Sigmoid colon (tissue), 7 donors: ENCODE measurements at regions of chr2 and their contacts with region 1.

Region 1: GRCh38 chr2:85354286-85355072 is at the starts of genes ELMOD3 and RETSAT:
- DNase-seq: peak; percentile 99
- H3K4me3 ChIP-seq: peak within 1 kb of the TSS; percentile 56 to 83 (median 64)
- H3K27ac ChIP-seq: peak within 1 kb of the TSS; percentile 80 to 88 (median 84)
- H3K4me1 ChIP-seq: peaks cover 0 to 44% (median 27%) of the 10 kb centered on the region in 4 donors
- H3K27me3 ChIP-seq: no peaks in the 10 kb centered on the region
- CTCF ChIP-seq: no peak
- EP300 ChIP-seq: no peak
- POLR2A ChIP-seq: peak; percentile 77 to 91
- total RNA-seq, gene ELMOD3: 16.7 to 26.3 (median 22.9) TPM
- total RNA-seq, gene RETSAT: 26.5 to 54.6 (median 42.1) TPM

Region 2: DNA sequence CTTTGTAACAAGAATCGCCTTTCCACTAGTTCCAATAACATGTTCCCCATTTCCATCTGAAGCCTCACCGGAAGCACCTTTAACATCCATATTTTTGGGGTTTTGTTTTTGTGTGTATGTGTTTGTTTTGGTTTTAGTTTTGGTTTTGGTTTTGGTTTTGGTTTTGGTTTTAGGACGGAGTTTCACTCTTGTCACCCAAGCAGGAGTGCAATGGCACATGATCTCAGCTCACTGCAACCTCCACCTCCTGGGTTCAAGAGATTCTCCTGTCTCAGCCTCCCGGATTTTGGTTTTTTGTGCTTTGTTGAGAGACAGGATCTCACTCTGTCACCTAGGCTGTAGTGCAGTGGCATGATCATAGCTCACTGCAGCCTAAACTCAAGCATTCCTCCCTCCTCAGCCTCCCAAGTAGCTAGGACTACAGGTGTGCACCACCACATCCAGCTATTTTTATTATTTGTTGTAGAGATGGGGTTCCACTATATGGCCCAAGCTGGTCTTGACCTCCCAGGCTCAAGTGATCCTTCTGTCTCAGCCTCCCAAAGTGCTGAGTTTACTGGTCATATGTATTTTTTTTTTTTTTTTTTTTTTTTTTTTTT is 63.0 kb before region 1 on chr2:
- intact Hi-C with region 1: no loop called
- DNase-seq: no peak
- H3K4me3 ChIP-seq: no peak overlapping the region
- H3K27ac ChIP-seq: no peak overlapping the region
- H3K4me1 ChIP-seq: no peaks in the 10 kb centered on the region
- H3K27me3 ChIP-seq: no peaks in the 10 kb centered on the region
- CTCF ChIP-seq: no peak
- EP300 ChIP-seq: no peak
- POLR2A ChIP-seq: no peak

Region 3: DNA sequence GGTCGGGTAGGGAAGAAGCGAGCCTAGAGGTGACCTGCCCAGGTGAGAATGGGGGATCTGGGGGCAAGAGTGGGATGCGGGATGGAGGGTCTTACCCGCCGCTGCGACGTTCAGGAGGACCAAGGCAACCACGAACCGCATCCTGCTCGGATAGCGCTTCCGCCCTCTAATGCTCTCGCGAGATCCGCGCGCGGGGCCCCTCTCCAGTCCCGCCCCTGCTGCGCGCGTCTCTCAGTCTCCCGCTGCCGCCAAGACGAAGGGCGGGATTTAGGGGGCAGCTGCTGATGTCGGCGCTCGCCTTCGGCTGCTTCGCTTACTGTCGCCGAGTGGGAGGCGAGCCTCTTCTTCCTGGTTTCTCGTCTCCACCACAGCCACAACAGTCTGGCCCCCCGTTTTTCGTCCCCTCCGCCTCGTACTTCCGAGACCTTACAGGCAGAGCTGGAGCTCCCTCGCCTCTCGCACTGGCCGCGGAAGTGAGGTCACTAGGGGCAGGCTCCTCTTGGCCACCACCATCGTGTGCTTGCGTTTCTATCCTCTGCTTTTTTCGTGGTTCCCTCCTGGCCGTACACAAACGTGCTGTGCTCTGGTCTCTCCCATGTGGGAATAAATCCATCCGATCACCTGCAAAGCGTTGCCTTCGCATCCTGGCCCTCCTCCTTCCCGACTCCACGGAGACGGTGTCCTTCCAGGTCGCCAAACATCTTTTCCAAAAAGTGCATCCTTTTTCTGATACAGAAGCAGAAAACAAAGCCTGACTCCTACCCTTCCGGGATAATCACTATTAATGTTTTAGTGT is 26.5 kb before region 1 on chr2 and contains the start of gene TGOLN2:
- intact Hi-C with region 1: loop called (anchors 1 kb)
- DNase-seq: peak; percentile 96
- H3K4me3 ChIP-seq: peak within 1 kb of the TSS; percentile 70 to 86 (median 71)
- H3K27ac ChIP-seq: peak within 1 kb of the TSS; percentile 90 to 97 (median 94)
- H3K4me1 ChIP-seq: peaks cover 0 to 42% (median 42%) of the 10 kb centered on the region in 4 donors
- H3K27me3 ChIP-seq: no peaks in the 10 kb centered on the region
- CTCF ChIP-seq: peak in 1 of 4 experiments; percentile 15
- EP300 ChIP-seq: no peak
- POLR2A ChIP-seq: peak; percentile 99
- total RNA-seq, gene TGOLN2: 78.9 to 95.0 (median 80.8) TPM

Region 4: DNA sequence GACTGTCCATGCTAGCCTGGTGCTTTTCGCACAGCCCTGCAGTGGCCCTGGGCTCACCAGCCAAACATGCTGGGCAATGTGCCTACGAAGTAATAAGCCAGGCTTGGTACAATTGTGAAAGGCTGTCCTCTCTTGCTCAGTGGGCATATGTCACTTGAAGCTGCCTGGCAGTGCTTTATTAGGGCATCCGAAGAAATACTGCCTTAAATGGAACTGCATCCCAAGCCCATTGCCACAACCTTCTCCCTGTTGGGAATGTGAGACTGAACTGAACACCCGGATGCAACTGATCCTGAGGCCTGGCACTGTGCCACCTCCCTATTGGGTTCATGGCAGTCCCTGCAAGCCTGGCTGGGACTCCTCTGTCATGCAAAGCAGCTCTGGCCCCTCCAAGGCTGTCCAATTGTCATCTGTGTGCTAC is 39.8 kb after region 1 on chr2:
- intact Hi-C with region 1: no loop called
- DNase-seq: peak; percentile 71
- H3K4me3 ChIP-seq: no peak overlapping the region
- H3K27ac ChIP-seq: no peak overlapping the region
- H3K4me1 ChIP-seq: peaks cover 0 to 17% (median 17%) of the 10 kb centered on the region in 4 donors
- H3K27me3 ChIP-seq: no peaks in the 10 kb centered on the region
- CTCF ChIP-seq: no peak
- EP300 ChIP-seq: no peak
- POLR2A ChIP-seq: no peak

Region 5: GRCh38 chr2:85501248-85501647 is 146.8 kb after region 1 on chr2:
- intact Hi-C with region 1: no loop called
- DNase-seq: no peak
- H3K4me3 ChIP-seq: no peak overlapping the region
- H3K27ac ChIP-seq: no peak overlapping the region
- H3K4me1 ChIP-seq: peaks cover 0 to 15% (median 12%) of the 10 kb centered on the region in 4 donors
- H3K27me3 ChIP-seq: no peaks in the 10 kb centered on the region
- CTCF ChIP-seq: no peak
- EP300 ChIP-seq: no peak
- POLR2A ChIP-seq: no peak

Region 6: GRCh38 chr2:86105252-86105968 is 750.9 kb after region 1 on chr2 and contains the start of gene POLR1A:
- intact Hi-C with region 1: loop called (anchors 10 kb)
- DNase-seq: peak; percentile 96
- H3K4me3 ChIP-seq: peak within 1 kb of the TSS; percentile 72 to 89 (median 82)
- H3K27ac ChIP-seq: peak within 1 kb of the TSS; percentile 83 to 86 (median 84)
- H3K4me1 ChIP-seq: peaks cover 0 to 47% (median 39%) of the 10 kb centered on the region in 4 donors
- H3K27me3 ChIP-seq: no peaks in the 10 kb centered on the region
- CTCF ChIP-seq: no peak
- EP300 ChIP-seq: no peak
- POLR2A ChIP-seq: no peak
- total RNA-seq, gene POLR1A: 7.1 to 17.9 (median 12.7) TPM